PC-3 (cell line): ENCODE measurements at regions of chr7 and their contacts with region 1.

Region 1: DNA sequence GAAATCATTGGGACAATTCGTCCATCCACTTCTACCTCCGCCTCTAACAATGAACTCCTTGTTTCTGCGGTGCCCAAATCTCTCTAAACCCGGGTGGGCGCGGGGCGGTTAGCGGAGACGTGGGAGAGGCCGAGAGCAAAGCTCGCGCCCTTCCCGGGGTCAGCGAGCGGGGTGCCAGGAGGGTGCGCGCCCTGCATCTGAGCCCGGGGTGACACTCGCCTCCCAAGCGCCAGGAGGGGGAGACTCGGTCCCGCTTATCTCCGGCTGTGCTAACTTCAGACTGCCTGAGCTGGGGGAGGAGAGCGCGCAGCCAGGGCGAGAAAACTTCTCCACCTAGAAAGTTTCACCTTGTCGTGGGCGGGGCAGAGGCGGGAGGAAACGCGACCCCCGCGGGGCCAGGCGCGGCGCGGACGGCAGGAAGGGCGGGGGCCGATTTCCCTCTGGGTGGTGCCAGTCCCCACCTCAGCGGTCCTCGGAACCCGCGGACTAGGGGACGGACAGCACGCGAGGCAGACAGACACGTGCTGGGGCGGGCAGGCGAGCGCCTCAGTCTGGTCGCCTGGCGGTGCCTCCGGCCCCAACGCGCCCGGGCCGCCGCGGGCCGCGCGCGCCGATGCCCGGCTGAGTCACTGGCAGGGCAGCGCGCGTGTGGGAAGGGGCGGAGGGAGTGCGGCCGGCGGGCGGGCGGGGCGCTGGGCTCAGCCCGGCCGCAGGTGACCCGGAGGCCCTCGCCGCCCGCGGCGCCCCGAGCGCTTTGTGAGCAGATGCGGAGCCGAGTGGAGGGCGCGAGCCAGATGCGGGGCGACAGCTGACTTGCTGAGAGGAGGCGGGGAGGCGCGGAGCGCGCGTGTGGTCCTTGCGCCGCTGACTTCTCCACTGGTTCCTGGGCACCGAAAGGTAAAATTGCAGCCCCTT is at the start of gene MET:
- DNase-seq: peak; percentile 90
- ATAC-seq: peak; percentile 76
- H3K4me3 ChIP-seq: peak within 1 kb of the TSS; percentile 99
- H3K27ac ChIP-seq: peak within 1 kb of the TSS; percentile 93
- H3K4me1 ChIP-seq: peaks cover 28% of the 10 kb centered on the region
- H3K27me3 ChIP-seq: no peaks in the 10 kb centered on the region
- CTCF ChIP-seq: peak; percentile 71
- total RNA-seq, gene MET: 109 and 118 TPM in 2 replicates

Region 2: DNA sequence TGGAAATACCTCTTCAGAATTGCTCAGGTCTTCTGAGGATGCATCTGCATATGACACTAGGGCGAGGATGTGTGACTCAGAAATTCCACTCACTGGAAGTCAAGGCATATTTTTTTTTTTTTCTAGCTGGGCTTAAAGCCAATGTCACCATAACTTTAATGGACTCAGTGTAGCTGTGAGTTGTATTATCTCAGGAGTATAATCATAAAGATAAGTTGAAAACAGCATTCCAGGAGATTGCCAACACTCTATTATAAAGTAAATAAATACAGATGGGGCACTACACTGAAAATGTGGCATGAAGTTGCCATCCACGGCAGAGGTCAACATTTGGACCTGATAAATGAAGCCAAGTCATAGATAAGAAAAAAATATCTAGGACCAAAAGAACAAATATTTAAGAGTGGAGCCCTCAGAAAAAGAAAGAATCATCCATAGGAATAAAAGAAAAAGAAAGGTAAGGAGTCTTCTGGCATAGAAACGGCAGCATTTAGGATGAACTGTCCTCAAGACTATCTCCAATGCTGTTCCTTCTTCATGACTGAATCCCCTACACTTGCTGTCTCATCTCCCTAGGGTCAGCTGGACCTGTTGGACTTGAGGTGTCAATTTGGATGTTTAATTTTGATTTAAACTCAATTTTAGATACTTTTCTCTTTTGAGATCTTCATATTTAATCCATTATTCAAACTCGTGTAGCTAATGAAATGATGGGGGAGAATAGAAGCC is 245.3 kb before region 1 on chr7:
- CTCF ChIA-PET with region 1: no interaction called
- POLR2A ChIA-PET with region 1: no interaction called
- intact Hi-C with region 1: no loop called
- DNase-seq: peak; percentile 96
- ATAC-seq: peak; percentile 70
- H3K4me3 ChIP-seq: no peak overlapping the region
- H3K27ac ChIP-seq: peak overlapping the region; percentile 52
- H3K4me1 ChIP-seq: peaks cover 30% of the 10 kb centered on the region
- H3K27me3 ChIP-seq: no peaks in the 10 kb centered on the region
- CTCF ChIP-seq: no peak

Region 3: DNA sequence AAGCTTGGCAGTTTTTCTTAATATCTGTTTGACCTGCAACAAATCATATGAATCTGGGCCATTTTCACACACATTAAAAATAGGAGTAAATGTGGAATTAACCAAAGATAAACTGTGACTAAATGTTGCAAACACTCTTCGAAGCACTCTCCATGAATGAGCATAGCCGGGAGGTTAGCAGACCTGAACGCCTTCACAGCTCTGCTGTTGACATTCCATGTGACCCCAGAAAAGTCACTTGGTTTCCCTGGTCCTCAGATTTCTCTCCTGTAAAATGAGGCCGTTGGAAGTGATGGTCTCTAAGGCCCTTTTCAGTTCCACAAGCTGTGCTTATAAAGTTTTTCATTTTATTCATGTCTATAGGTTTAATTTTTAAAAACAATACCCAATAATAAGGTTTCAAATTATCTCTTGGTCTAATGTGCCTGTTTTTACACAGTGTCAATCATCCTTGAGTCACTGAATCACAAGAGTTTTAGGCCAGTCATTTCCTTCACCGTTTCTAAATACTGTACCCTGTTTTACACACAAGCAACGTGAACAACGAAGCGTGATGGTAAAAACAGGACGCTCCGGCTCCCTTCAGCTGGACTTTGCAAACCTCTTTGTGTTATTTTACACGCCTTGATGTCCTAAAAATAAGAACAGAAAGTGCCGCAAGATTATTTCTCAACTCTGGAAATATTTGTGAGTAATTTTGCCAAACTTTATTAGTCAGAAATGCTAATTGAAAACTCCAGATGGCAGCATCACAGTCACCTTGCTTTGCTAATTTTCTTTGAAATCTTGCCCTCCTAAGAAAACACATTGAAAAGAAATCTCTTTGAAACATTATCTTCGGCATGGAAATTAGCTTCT is 38.6 kb before region 1 on chr7:
- CTCF ChIA-PET with region 1: interaction called, 3 read pairs
- POLR2A ChIA-PET with region 1: no interaction called
- intact Hi-C with region 1: loop called (anchors 2 kb)
- DNase-seq: peak; percentile 13
- ATAC-seq: peak; percentile 53
- H3K4me3 ChIP-seq: peak overlapping the region; percentile 39; the same call in 1 of the 2 replicates
- H3K27ac ChIP-seq: peak overlapping the region; percentile 17; the same call in 1 of the 2 replicates
- H3K4me1 ChIP-seq: peaks cover 36% of the 10 kb centered on the region
- H3K27me3 ChIP-seq: no peaks in the 10 kb centered on the region
- CTCF ChIP-seq: peak; percentile 34; the same call in 1 of the 2 replicates

Region 4: GRCh38 chr7:116706668-116707126 is 34.8 kb after region 1 on chr7:
- CTCF ChIA-PET with region 1: interaction called, 5 read pairs
- POLR2A ChIA-PET with region 1: interaction called, 3 read pairs
- intact Hi-C with region 1: loop called (anchors 1 kb)
- DNase-seq: peak; percentile 85
- ATAC-seq: peak; percentile 59
- H3K4me3 ChIP-seq: peak overlapping the region; percentile 53
- H3K27ac ChIP-seq: peak overlapping the region; percentile 62
- H3K4me1 ChIP-seq: peaks cover 98% of the 10 kb centered on the region
- H3K27me3 ChIP-seq: no peaks in the 10 kb centered on the region
- CTCF ChIP-seq: no peak

Region 5: DNA sequence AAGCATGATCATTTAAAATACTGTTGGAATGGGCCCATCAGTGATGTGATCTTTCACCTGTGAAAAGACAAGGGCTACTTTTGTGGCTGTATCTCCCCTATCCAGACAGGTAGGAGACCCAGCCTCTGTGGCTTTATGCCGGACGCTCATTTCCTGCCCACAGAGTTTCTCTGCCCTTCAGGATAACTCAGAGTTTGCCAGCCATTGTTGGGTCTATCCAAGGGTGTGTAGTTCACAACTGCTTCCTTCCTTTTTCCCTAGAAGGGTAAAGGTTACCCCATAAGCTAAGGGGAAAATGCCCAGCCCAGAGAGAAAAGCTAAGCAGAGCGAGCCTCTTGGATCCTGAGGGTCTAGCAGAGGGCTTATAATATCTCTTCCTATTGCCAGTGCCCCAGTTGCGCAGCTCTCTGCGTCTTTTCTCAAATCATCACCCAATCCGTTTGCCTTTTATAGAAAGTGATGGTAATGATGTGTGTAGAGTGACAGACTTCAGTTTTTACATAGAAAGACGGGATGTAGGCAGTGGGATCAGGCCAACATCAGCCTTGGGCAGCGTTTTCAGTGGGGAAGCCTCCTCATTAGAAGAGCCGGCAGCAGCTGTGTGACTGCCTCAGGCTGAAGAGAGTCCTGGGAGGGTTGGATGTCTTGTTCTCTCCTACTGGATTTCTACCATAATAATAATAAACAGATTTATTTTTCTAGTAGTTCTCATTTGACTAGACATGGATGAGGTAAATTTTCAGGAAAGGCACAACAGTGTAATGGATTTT is 80.6 kb after region 1 on chr7:
- CTCF ChIA-PET with region 1: no interaction called
- POLR2A ChIA-PET with region 1: no interaction called
- intact Hi-C with region 1: no loop called
- DNase-seq: no peak
- ATAC-seq: no peak; the same call in 1 of the 2 replicates
- H3K4me3 ChIP-seq: no peak overlapping the region
- H3K27ac ChIP-seq: no peak overlapping the region
- H3K4me1 ChIP-seq: no peaks in the 10 kb centered on the region
- H3K27me3 ChIP-seq: no peaks in the 10 kb centered on the region
- CTCF ChIP-seq: no peak

Region 6: GRCh38 chr7:116776610-116777289 is 104.8 kb after region 1 on chr7:
- CTCF ChIA-PET with region 1: interaction called, 4 read pairs
- POLR2A ChIA-PET with region 1: interaction called, 3 read pairs
- intact Hi-C with region 1: loop called (anchors 1 kb)
- DNase-seq: peak; percentile 91
- ATAC-seq: peak; percentile 55
- H3K4me3 ChIP-seq: peak overlapping the region; percentile 53
- H3K27ac ChIP-seq: peak overlapping the region; percentile 99
- H3K4me1 ChIP-seq: peaks cover 85% of the 10 kb centered on the region
- H3K27me3 ChIP-seq: no peaks in the 10 kb centered on the region
- CTCF ChIP-seq: no peak